ENCODE measurements at regions of chr5 and their contacts with region 1.

Region 1: DNA sequence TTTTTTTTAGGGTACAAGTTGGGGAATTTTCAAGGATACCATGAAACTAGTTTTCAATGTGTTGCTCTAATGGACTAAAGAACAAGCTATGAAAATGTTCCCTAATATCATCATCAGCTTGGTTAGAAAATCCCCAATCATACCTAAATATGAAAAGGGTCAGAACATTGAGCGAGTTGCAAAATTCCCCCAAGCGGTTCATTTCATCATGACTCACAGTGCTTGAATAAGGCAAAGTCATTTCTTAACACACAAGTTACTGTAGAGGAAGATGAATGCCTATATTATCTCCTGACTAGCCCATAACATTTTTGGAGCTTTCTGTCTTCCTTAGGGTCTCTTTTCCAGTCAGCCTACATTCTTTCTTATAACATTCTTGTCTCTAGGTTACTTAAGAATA is 62.7 kb downstream of the ST8SIA4 start:
- DNase-seq: peak; percentile 22
- H3K4me3 Mint-ChIP-seq: no peak overlapping the region
- H3K27ac Mint-ChIP-seq: peak overlapping the region; percentile 95
- H3K4me1 Mint-ChIP-seq: peaks cover 71% of the 10 kb centered on the region
- H3K27me3 Mint-ChIP-seq: no peaks in the 10 kb centered on the region

Region 2: GRCh38 chr5:100722657-100723056 is 117.7 kb before region 1 on chr5:
- intact Hi-C with region 1: no loop called
- DNase-seq: no peak
- H3K4me3 Mint-ChIP-seq: no peak overlapping the region
- H3K27ac Mint-ChIP-seq: no peak overlapping the region
- H3K4me1 Mint-ChIP-seq: no peaks in the 10 kb centered on the region
- H3K27me3 Mint-ChIP-seq: peaks cover 5% of the 10 kb centered on the region

Region 3: DNA sequence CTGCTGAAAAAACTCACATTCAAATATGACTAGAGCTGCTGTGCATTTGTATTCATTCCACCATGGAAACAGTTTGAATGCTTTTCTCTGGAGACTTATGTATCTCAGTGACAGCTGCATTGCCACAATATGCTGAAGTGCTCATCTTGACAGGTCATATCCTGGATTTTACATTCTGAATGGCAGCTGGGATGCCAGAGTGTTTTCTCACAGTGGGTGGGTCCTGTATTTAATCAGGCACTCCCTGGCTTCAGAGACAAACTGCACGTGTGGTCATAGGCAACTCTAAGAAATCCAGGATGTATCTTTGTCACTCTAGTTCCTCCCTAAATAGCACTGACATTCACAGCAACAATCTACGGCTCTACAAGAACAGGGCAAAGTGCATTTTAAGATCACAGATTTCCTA is 12.9 kb before region 1 on chr5:
- intact Hi-C with region 1: loop called (anchors 1 kb)
- DNase-seq: no peak
- H3K4me3 Mint-ChIP-seq: no peak overlapping the region
- H3K27ac Mint-ChIP-seq: peak overlapping the region; percentile 31
- H3K4me1 Mint-ChIP-seq: peaks cover 36% of the 10 kb centered on the region
- H3K27me3 Mint-ChIP-seq: no peaks in the 10 kb centered on the region

Region 4: DNA sequence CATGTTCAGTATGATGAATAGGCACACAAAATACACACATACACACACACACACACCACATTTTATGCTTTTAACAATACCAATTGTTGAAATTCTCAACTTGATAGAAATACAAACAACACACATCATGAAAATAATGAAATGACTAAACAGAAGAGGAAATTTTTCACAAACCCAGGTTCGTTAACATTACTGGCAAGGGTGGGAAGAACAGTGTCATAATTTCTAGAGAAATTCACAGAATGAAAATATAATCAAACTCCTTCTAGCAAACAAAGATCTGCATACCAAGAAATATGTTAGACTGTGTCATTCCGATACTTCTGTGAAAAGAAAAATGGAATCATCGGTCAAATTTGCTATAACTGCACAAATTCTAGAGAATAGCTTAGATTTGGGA is 20.8 kb after region 1 on chr5:
- intact Hi-C with region 1: loop called (anchors 1 kb)
- DNase-seq: no peak
- H3K4me3 Mint-ChIP-seq: peak overlapping the region; percentile 77
- H3K27ac Mint-ChIP-seq: peak overlapping the region; percentile 97
- H3K4me1 Mint-ChIP-seq: peaks cover 64% of the 10 kb centered on the region
- H3K27me3 Mint-ChIP-seq: no peaks in the 10 kb centered on the region

Region 5: DNA sequence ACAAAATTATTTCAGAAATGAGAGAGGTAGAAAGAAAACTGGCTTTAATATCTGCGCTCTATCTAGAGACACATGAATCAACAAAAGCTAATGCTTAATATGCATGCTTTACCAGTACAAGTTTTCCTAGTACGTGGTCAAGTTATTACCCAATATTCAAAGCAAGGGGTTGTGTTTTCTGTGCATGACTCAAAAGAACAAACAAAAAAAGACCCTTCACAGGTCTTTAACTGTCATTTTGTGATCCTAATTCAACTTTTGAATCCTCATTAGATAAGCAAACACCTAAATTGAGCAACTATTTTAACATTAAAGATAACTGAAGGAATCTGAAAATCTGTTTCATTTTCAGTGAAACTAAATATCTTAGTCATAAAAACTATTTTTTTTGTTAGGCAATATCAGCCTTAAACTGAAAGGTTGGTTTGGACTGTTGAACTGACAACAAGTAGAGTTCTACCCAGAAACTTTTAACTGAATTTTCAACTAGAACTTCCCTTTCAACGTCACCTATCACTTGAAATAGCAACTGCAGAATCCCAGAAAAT is 50.2 kb after region 1 on chr5:
- intact Hi-C with region 1: loop called (anchors 1 kb)
- DNase-seq: no peak
- H3K4me3 Mint-ChIP-seq: peak overlapping the region; percentile 81
- H3K27ac Mint-ChIP-seq: peak overlapping the region; percentile 94
- H3K4me1 Mint-ChIP-seq: peaks cover 85% of the 10 kb centered on the region
- H3K27me3 Mint-ChIP-seq: no peaks in the 10 kb centered on the region

Region 6: DNA sequence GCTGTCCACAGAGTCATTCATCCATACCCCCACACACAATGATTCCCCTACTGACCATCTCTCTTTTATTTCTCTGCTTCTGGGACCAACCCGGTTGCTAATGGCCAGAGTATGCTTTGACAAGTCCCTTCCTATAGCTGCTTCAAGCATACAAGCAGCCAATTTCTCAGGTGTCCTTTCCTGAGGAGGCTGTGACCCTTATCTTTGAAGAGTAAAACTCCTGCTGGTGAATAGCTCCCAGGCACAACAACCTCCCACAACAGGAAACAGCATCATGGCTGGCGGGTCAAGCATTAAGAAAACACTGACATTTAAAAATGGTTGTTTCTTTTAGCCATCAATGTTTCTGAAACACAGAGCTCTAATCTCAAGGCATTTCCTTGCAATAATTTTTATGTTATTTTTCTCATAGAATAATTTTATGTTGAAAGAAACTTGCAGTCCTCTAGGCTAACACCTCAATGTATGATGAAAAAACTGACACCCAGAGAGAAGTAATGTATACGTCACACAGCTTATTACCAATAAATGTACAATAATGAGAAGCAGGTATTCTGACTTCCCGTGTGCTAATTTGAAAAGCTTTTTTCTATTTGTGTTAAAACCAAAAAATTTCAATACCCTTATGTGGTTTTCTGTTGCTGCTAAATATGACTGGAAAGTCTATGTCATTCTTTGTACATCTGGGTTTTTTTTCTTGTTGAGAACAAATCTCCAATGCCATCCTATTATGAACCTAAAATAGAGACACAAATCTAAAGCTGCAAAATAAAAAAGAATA is 1907.2 kb after region 1 on chr5:
- intact Hi-C with region 1: loop called (anchors 10 kb)
- DNase-seq: no peak
- H3K4me3 Mint-ChIP-seq: peak overlapping the region; percentile 20
- H3K27ac Mint-ChIP-seq: peak overlapping the region; percentile 63
- H3K4me1 Mint-ChIP-seq: peaks cover 21% of the 10 kb centered on the region
- H3K27me3 Mint-ChIP-seq: no peaks in the 10 kb centered on the region